IMR-90 (cell line): ENCODE measurements at regions of chr19 and their contacts with region 1.

Region 1: DNA sequence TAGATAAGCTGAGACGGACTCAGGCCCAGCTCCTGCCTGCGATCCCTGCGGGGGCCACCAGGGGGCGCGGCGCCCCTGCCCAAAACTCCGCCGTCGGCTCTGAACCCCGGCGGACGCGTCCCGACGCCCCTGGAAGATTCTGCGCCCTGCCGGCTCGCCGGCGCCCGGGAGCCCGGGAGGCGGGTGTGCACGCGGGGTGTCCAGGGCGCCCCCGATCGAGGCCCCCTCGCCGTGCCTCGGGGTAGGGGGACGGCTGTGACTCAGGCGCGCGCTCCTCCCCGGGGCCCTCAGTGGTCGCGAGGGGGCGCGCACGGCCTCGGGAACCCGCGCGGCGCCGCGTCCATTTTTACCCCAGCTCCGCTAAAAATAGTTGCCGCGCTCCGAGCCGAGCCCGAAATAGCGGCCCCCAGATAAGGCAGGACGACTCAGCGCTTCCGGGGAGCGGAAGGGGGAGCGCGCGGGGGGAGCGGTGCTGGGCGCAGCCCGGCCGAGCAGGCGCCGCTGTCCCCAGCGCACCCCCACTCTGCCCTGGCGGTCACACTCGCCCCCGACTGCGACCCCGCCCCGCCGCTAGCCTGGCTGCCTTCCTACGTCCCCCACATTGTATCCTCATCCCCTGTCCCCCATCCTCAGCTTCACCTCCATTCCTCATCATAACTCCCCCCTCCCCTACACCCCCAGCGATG is 16.0 kb upstream of the ERCC1 start:
- DNase-seq: peak; percentile 72
- ATAC-seq: peak; percentile 72
- H3K4me3 ChIP-seq: peak overlapping the region; percentile 64
- H3K27ac ChIP-seq: peak overlapping the region; percentile 62
- H3K4me1 ChIP-seq: peaks cover 17% of the 10 kb centered on the region
- H3K27me3 ChIP-seq: no peaks in the 10 kb centered on the region
- CTCF ChIP-seq: peak; percentile 84
- POLR2A ChIP-seq: peak; percentile 75
- RAD21 ChIP-seq: peak; percentile 82

Region 2: DNA sequence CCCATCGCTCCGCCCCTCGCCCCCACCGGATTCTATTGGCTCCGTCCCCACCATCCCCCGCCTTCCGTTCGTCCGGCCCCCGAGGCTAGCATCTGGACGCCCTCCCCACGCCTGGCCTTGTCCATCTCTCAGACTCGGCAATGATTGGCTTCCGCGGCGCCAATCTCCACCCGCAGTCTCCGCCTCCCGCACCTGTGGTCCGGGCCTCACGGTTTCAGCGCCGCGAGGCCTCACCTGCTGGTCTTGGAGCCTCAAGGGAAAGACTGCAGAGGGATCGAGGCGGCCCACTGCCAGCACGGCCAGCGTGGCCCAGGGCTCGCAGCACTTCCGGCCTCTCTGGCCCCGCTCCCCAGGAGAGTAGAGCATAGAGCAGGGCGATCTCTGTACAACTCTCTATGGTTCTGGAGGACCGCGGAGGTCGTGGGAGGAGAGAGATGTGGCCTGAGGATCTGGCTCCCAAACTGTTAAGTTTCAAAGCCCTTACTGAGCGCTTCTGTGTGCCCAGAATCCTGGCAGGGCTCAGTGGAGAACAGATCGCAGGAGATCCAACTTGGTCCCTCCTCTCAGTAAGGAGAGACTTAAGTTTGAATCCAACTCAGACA is 16.0 kb before region 1 on chr19 and contains the start of gene ERCC1:
- CTCF ChIA-PET with region 1: interaction called, 10 read pairs
- POLR2A ChIA-PET with region 1: no interaction called
- dilution Hi-C with region 1: no loop called
- in situ Hi-C with region 1: no loop called
- intact Hi-C with region 1: no loop called
- DNase-seq: peak; percentile 94
- ATAC-seq: peak; percentile 83
- H3K4me3 ChIP-seq: peak within 1 kb of the TSS; percentile 70
- H3K27ac ChIP-seq: peak within 1 kb of the TSS; percentile 98
- H3K4me1 ChIP-seq: peaks cover 5% of the 10 kb centered on the region
- H3K27me3 ChIP-seq: no peaks in the 10 kb centered on the region
- CTCF ChIP-seq: no peak
- POLR2A ChIP-seq: peak; percentile 88
- RAD21 ChIP-seq: no peak
- total RNA-seq, gene ERCC1: 76.9 and 84.2 TPM in 2 replicates

Region 3: DNA sequence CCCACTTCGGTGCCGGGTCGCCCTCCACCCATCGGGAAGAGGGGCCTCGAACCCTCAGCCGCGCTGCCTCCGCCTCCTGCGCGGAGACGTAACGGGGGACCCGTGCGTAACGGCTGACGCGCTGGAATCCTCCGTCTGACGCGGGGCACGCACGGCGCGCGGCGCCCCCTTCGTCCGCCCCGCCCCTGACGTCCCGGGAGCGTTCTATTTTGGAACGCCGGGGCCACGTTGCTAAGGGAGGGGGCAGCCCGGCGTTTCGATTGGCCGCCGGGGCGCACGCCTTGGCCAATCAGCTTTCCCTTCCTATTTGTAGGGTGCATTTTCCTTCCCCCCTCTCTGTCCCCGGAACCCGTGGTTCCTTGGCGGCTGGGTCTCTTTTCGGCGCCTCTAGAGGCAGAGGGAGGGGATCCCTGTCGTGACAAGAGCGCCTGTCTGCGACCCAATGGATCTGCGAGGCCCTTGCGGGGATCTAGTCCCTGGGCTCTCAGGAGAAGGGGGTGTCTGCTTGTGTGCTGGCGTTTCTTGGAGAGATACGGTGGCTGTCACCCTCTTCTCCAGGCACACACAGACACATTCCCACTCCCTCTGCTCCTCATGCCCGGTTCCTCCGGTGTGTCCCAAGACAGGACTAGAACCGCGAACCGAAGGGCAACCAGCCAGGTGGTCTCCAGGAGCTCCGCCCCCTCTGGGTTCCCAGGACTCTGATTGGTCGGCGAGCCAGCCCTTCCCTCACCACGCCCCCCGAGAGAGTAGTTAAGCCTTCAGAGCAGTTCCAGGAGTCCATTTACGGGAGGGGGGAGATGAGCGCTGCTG is 29.6 kb after region 1 on chr19:
- CTCF ChIA-PET with region 1: interaction called, 12 read pairs
- POLR2A ChIA-PET with region 1: no interaction called
- dilution Hi-C with region 1: no loop called
- in situ Hi-C with region 1: no loop called
- intact Hi-C with region 1: loop called (anchors 1 kb)
- DNase-seq: peak; percentile 92
- ATAC-seq: peak; percentile 90
- H3K4me3 ChIP-seq: peak overlapping the region; percentile 76
- H3K27ac ChIP-seq: peak overlapping the region; percentile 53
- H3K4me1 ChIP-seq: peaks cover 13% of the 10 kb centered on the region
- H3K27me3 ChIP-seq: no peaks in the 10 kb centered on the region
- CTCF ChIP-seq: no peak
- POLR2A ChIP-seq: no peak
- RAD21 ChIP-seq: no peak

Region 4: DNA sequence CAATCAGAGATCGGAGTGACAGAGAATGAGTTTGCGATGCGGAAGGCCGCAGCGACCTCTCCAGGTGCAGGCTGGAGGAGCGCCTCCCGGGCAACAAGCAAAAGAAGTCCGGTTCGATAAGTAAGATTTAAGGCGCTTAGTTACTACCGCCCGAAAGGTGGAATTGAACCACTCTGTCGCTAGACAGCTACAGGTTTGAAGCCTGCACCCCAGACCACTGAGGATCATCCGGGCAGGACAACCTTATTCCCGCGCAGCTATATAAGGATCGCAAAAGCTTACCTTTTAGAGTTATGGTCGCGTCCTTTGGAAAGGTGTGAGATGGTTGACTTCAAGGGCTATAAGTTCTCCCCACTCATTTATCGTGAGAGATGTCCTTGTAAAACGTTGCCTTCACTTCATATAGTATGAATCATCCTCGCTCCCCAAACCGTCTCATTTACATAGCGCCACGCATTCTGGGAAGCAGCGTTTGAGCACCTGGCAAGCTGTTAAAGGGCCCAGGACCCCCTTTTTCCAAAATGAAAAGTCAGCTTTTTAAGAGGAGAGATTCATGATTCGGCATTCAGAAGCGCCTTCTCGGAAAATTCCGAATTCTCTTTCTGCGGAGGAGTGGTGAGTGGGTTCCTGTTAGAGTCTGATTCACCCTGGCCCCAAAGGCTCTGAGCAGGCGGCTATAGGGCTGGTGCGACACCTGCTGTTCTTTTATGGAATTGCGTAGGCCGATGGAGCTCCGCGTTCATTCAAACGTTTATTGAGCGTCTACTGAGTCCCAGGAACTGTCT is 38.9 kb after region 1 on chr19:
- CTCF ChIA-PET with region 1: interaction called, 87 read pairs
- POLR2A ChIA-PET with region 1: interaction called, 4 read pairs
- dilution Hi-C with region 1: no loop called
- in situ Hi-C with region 1: loop called (anchors 5 kb)
- intact Hi-C with region 1: loop called (anchors 1 kb)
- DNase-seq: peak; percentile 96
- ATAC-seq: peak; percentile 96
- H3K4me3 ChIP-seq: peak overlapping the region; percentile 49
- H3K27ac ChIP-seq: peak overlapping the region; percentile 68
- H3K4me1 ChIP-seq: peaks cover 4% of the 10 kb centered on the region
- H3K27me3 ChIP-seq: no peaks in the 10 kb centered on the region
- CTCF ChIP-seq: no peak
- POLR2A ChIP-seq: no peak
- RAD21 ChIP-seq: no peak

Region 5: DNA sequence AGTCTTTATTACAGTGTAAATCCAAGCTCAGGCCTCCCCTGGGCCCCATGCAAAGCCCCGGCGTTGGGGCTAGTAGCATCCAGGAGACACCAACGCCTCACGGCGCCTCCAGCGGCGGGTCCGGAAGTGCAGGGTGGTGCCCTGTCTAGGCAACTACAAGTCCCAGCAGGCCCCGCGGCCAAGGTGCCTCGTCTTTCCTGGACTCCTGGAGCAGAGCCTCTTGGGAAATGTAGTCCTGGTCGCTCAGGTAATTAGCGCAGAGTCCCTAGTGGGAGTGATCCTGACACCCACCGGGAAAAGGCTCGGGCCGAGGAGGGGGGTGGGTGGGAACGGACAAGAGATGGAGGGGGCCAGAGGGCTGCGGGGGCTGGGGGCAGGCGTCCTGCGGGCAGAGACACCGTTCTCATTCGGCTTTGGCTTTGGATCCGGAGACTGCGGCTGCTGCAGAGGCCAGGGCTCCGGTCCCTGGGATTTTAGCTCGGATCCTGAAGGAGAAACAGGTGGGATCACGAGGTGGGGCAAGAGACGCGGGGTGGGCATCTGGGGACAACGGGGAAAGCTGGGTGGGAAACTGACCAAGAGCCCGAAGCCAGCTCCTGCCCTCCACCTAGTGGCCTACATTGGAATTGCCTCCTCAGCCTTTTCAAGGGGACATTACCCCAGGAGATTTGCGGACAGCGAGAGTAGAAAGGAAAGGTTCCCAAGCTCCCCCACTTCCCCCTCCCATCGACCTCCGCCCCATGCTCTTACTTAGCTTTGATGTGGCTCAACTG is 45.8 kb after region 1 on chr19:
- CTCF ChIA-PET with region 1: interaction called, 21 read pairs
- POLR2A ChIA-PET with region 1: no interaction called
- dilution Hi-C with region 1: no loop called
- in situ Hi-C with region 1: no loop called
- intact Hi-C with region 1: loop called (anchors 1 kb)
- DNase-seq: peak; percentile 90
- ATAC-seq: peak; percentile 100
- H3K4me3 ChIP-seq: peak overlapping the region; percentile 57
- H3K27ac ChIP-seq: peak overlapping the region; percentile 47; the same call in 1 of the 2 replicates
- H3K4me1 ChIP-seq: no peaks in the 10 kb centered on the region
- H3K27me3 ChIP-seq: no peaks in the 10 kb centered on the region
- CTCF ChIP-seq: peak; percentile 83
- POLR2A ChIP-seq: no peak
- RAD21 ChIP-seq: peak; percentile 69

Region 6: DNA sequence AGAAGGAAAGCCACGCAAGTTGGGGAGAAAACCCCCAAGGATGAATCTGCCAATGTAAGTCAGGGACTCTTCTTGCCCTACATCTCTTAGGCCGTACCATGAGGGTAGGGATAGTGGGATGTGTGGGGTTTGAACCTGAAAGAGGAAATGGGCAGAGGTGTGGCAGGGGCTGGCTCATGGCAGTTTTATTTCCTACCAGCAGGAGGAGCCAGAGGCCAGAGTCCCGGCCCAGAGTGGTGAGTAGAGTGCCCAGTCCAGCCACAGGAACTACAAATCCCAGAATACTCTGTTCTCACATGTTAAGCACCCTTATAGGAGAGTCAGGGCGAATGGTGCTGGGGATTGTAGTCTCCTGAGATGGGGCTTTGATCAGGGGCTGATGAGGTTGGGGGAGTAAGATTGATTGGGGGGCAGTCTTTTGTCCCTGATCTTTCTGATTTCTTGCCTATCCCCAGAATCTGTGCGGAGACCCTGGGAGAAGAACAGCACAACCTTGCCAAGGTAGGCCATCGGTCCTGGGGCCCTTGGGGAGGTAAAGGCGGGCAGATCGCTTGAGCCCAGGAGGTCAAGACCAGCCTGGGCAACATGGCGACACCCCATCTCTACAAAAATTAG is 84.0 kb after region 1 on chr19:
- CTCF ChIA-PET with region 1: no interaction called
- POLR2A ChIA-PET with region 1: no interaction called
- dilution Hi-C with region 1: no loop called
- in situ Hi-C with region 1: no loop called
- intact Hi-C with region 1: no loop called
- DNase-seq: peak; percentile 80
- ATAC-seq: peak; percentile 92
- H3K4me3 ChIP-seq: no peak overlapping the region
- H3K27ac ChIP-seq: no peak overlapping the region
- H3K4me1 ChIP-seq: peaks cover 2% of the 10 kb centered on the region; the same call in 1 of the 2 replicates
- H3K27me3 ChIP-seq: no peaks in the 10 kb centered on the region
- CTCF ChIP-seq: peak; percentile 93
- POLR2A ChIP-seq: no peak
- RAD21 ChIP-seq: peak; percentile 93